ENCODE measurements at regions of chr2 and their contacts with region 1.

Region 1: DNA sequence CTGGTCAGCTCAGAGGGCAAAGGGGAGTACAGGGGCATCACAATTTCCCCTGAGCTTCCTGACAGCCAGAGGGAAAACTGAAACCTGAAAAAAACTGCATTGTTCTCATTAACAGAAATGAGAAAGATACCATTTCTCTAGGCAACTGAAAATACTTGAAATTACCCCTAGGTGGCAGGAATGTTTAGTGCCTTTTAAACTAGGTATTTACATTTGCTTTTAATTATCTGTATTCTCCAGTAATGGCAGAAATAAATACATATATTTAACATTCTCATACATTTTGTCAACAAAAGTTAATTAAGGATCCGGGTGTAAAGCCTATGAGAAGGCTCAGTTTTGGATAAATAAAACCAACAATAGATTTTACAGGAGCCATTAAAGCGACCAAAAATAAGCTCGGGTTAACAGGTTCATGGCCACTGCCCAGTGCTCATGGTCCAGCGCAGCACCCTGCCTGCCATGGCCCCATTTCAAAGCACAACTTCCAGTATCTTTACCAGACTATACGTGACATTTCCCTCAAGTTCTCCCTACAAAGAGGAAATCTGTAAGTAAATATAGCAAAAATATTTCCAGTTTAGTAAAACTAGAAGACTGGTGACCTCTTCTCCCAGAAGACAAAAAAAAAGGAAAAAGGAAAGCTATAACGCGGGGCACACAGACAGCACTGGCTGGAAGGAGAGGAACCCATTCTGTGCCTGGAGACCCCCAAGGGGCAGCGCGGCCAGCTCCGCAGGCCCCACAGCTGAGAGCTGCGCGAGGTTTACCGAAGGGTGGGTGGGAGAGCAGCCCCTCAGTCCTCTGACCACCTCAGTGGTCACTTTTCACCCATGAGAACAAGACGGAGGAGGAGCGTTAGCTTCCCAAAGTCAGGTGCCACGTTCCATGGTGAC is 34.7 kb downstream of the RPL31 start:
- DNase-seq: peak in 1 of 4 donors; percentile 7
- ATAC-seq: peak; percentile 37
- H3K4me3 ChIP-seq: no peak overlapping the region
- H3K27ac ChIP-seq: no peak overlapping the region
- H3K4me1 ChIP-seq: peaks cover 0 to 36% of the 10 kb centered on the region in 2 donors
- H3K27me3 ChIP-seq: no peaks in the 10 kb centered on the region
- CTCF ChIP-seq: peak; percentile 42 to 45

Region 2: GRCh38 chr2:101089419-101089818 is 52.6 kb after region 1 on chr2:
- intact Hi-C with region 1: no loop called
- DNase-seq: no peak
- ATAC-seq: no peak
- H3K4me3 ChIP-seq: no peak overlapping the region
- H3K27ac ChIP-seq: no peak overlapping the region
- H3K4me1 ChIP-seq: peaks cover 0 to 4% of the 10 kb centered on the region in 2 donors
- H3K27me3 ChIP-seq: no peaks in the 10 kb centered on the region
- CTCF ChIP-seq: no peak

Region 3: GRCh38 chr2:101151141-101151858 is 114.5 kb after region 1 on chr2 and contains the start of gene TBC1D8:
- intact Hi-C with region 1: loop called in 1 of 2 experiments (anchors 10 kb)
- DNase-seq: peak; percentile 75 to 98 (median 92)
- ATAC-seq: peak; percentile 88
- H3K4me3 ChIP-seq: peak within 1 kb of the TSS; percentile 59 to 78
- H3K27ac ChIP-seq: peak within 1 kb of the TSS; percentile 63 to 84
- H3K4me1 ChIP-seq: peaks cover 8 to 56% of the 10 kb centered on the region in 2 donors
- H3K27me3 ChIP-seq: no peaks in the 10 kb centered on the region
- CTCF ChIP-seq: no peak
- polyA plus RNA-seq, gene TBC1D8: 23.2 to 36.5 (median 32.8) TPM

Region 4: GRCh38 chr2:101173707-101174295 is 137.0 kb after region 1 on chr2:
- intact Hi-C with region 1: no loop called
- DNase-seq: peak in 1 of 4 donors; percentile 68
- ATAC-seq: peak; percentile 90
- H3K4me3 ChIP-seq: no peak overlapping the region
- H3K27ac ChIP-seq: peak overlapping the region in 1 of 2 donors; percentile 64
- H3K4me1 ChIP-seq: peaks cover 0 to 31% of the 10 kb centered on the region in 2 donors
- H3K27me3 ChIP-seq: no peaks in the 10 kb centered on the region
- CTCF ChIP-seq: no peak

Region 5: DNA sequence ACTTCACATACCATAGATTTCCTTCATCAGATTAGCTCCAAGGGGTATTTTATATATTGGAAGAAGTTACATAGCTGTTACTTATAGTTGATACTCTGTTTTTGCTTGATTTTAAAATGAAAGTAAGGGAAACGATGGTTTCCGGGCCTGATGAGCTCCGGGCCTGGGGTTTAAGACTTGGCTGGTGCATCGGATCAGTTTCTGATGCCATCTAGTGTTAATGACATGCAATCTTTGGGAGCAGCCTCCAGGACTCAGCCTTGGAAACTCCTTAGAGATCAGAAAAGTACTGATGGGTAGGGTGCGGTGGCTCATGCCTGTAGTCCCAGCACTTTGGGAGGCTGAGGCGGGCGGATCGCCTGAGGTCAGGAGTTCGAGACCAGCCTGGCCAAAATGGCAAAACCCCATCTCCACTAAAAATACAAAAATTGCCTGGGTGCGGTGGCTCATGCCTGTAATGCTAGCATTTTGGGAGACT is 168.8 kb after region 1 on chr2:
- intact Hi-C with region 1: loop called in 1 of 2 experiments (anchors 10 kb)
- DNase-seq: peak in 3 of 4 donors; percentile 42 to 81 (median 54)
- ATAC-seq: peak; percentile 94
- H3K4me3 ChIP-seq: peak overlapping the region in 1 of 2 donors; percentile 2
- H3K27ac ChIP-seq: no peak overlapping the region
- H3K4me1 ChIP-seq: peaks cover 0 to 17% of the 10 kb centered on the region in 2 donors
- H3K27me3 ChIP-seq: no peaks in the 10 kb centered on the region
- CTCF ChIP-seq: peak; percentile 47 to 57

Region 6: GRCh38 chr2:101223814-101224231 is 187.0 kb after region 1 on chr2:
- intact Hi-C with region 1: no loop called
- DNase-seq: no peak
- ATAC-seq: peak; percentile 21
- H3K4me3 ChIP-seq: no peak overlapping the region
- H3K27ac ChIP-seq: no peak overlapping the region
- H3K4me1 ChIP-seq: peaks cover 0 to 5% of the 10 kb centered on the region in 2 donors
- H3K27me3 ChIP-seq: no peaks in the 10 kb centered on the region
- CTCF ChIP-seq: no peak